ENCODE measurements at regions of chr16 and their contacts with region 1.

Region 1: DNA sequence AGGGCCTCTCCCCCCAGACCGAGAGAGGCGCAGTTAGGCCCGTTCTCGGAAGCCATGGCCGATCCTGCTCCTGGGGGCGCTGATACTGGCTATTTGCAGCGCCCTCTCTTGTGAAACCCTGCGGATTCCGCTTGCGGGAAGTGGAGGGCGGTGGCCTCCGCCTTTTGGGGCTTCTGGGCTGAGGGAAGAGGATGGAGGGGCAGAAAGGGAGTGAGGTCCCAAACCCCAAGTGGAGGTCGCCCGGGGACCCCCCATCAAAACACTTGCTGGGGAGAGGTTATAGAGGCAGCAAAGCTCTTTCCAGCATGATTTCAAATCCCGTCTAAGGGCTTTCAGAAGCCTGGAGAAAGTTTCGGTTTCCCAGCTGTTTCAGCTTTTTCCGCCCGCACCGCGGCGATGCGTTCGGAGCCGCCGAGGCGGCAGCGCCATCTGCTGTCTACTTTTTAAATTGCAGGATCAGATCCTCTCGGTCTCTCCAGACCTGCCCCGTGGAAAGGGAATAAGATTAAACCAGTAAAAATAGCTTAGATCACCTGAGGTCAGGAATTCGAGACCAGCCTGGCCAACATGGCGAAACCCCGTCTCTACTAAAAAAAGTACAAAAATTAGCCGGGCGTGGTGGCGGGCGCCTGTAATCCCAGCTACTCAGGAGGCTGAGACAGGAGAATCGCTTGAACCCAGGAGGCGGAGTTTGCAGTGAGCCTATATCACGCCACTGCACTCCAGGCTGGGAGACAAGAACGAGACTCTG is 15.8 kb downstream of the SNX20 start:
- DNase-seq: peak; percentile 82
- ATAC-seq: peak; percentile 48
- H3K4me3 Mint-ChIP-seq: peak overlapping the region; percentile 54
- H3K27ac Mint-ChIP-seq: peak overlapping the region; percentile 58
- H3K4me1 Mint-ChIP-seq: peaks cover 31% of the 10 kb centered on the region
- H3K27me3 Mint-ChIP-seq: no peaks in the 10 kb centered on the region
- CTCF ChIP-seq: peak; percentile 96

Region 2: DNA sequence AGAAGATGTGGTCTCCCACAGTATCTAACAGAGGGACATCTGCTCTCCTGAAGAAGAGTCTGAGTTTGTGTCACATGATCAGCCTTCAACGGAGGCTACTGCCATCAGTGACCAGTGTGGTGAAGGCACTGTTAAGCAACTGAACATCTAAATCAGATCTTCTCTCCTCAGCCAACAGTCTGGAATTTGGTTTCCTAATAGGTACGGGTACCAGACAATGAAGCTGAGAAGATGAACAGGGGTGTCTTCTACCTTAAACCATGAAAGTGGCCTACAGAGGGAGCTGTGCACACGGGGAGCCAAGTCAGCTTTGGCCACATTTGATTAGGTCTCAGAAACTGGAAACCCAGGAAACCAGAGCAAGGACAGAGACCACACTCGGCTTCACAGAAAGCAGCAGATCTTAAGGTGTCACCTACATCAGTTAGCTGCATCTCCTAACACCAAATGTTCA is 338.3 kb before region 1 on chr16:
- CTCF ChIA-PET with region 1: interaction called, 41 read pairs
- POLR2A ChIA-PET with region 1: no interaction called
- intact Hi-C with region 1: no loop called
- DNase-seq: peak; percentile 86
- ATAC-seq: peak; percentile 95
- H3K4me3 Mint-ChIP-seq: no peak overlapping the region
- H3K27ac Mint-ChIP-seq: peak overlapping the region; percentile 73
- H3K4me1 Mint-ChIP-seq: peaks cover 51% of the 10 kb centered on the region
- H3K27me3 Mint-ChIP-seq: no peaks in the 10 kb centered on the region
- CTCF ChIP-seq: peak; percentile 65

Region 3: DNA sequence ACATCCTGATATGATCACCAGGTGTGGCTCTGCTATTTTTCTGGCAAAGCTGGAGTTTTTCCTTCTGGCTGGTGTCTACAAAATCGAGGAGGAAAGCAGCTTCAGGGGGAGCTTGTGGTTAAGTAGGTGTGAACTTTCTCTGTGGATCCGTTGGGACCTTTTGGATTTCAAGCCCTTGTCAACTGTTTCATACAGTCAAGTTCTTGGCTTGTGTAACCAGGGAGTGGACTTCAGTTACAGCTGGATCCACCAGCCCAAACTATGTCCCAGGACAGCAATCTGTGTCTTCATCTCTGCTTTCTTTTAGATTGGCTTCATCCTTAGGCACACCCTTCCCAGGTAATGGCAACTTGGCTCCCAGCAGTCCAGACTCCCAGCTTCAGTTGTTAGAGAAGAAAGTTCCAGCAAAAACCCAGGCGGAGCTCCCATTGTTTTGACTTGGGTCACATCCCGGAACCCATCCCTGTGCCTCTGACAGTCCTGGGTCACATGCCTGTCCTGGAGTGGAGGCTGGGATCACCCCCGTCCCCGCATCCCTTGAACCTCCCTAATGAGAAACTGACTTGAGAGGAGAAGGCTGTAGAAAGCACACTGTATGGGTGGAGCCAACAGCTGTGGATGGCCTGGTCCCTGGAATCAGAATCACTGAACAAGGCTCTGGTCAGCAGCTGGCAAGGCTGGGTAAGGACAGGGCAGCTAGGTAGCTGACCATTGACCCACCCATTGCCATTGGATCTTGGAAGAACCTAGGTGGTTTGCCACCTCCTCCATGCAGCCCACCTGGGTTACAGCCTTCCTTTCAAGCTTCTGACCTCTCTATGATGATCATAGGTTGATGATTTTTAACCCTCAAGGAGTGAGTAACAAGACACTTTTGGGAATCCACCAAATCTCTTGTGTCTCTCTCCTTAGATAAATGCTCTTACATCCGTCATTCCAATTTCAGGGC is 99.0 kb before region 1 on chr16:
- CTCF ChIA-PET with region 1: interaction called, 11 read pairs
- POLR2A ChIA-PET with region 1: no interaction called
- intact Hi-C with region 1: no loop called
- DNase-seq: no peak
- ATAC-seq: no peak
- H3K4me3 Mint-ChIP-seq: no peak overlapping the region
- H3K27ac Mint-ChIP-seq: no peak overlapping the region
- H3K4me1 Mint-ChIP-seq: peaks cover 18% of the 10 kb centered on the region
- H3K27me3 Mint-ChIP-seq: no peaks in the 10 kb centered on the region
- CTCF ChIP-seq: no peak

Region 4: DNA sequence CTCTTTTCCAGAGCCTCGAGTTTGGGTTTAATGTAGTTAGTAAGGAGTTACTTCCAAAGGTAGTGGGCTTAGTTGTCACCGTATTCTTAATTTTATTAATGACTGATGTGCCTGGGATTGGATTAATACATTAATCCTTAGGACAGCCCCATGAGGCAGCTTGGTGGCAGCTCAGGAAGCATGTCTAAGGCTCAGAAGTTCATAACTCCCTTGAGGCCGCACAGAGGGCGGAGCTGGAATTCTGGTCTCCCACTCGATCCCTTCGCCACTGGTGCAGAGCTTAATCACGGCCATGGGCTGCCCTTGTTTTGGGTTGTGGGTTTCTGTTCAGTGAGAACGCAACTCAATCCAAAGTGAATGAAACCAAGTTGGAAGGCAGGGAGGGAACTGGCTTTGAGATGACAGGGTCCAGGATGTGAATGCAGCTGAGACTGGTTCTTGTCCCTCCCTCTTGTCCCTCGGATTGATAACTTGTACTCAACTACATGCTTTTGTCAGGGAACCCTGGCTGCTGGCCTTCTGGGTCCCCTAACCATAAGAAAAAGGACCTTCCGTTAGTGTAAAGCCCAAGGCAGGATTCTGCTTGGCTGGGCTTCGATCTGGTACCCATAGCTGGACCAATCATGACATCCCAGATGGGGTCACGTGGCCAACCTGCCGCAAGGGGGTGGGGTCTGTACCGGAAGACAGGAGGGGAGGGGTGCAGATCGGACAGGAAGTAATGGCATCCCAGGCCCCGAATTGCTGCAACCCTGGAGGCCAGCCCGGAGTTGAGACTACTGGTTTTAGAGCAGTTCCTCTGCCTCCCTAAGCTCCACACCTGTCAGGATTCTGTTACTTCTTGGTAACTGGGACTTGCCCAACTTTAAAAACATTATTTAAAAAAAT is 29.6 kb before region 1 on chr16:
- CTCF ChIA-PET with region 1: interaction called, 17 read pairs
- POLR2A ChIA-PET with region 1: no interaction called
- intact Hi-C with region 1: no loop called
- DNase-seq: peak; percentile 60
- ATAC-seq: peak; percentile 79
- H3K4me3 Mint-ChIP-seq: no peak overlapping the region
- H3K27ac Mint-ChIP-seq: no peak overlapping the region
- H3K4me1 Mint-ChIP-seq: peaks cover 2% of the 10 kb centered on the region
- H3K27me3 Mint-ChIP-seq: no peaks in the 10 kb centered on the region
- CTCF ChIP-seq: no peak

Region 5: GRCh38 chr16:50696575-50697420 is 31.5 kb after region 1 on chr16:
- CTCF ChIA-PET with region 1: interaction called, 11 read pairs
- POLR2A ChIA-PET with region 1: interaction called, 3 read pairs
- intact Hi-C with region 1: no loop called
- DNase-seq: peak; percentile 63
- ATAC-seq: peak; percentile 35
- H3K4me3 Mint-ChIP-seq: no peak overlapping the region
- H3K27ac Mint-ChIP-seq: peak overlapping the region; percentile 90
- H3K4me1 Mint-ChIP-seq: peaks cover 69% of the 10 kb centered on the region
- H3K27me3 Mint-ChIP-seq: peaks cover 8% of the 10 kb centered on the region
- CTCF ChIP-seq: no peak

Region 6: GRCh38 chr16:50781043-50781442 is 115.7 kb after region 1 on chr16:
- CTCF ChIA-PET with region 1: interaction called, 25 read pairs
- POLR2A ChIA-PET with region 1: interaction called, 4 read pairs
- intact Hi-C with region 1: no loop called
- DNase-seq: peak; percentile 24
- ATAC-seq: peak; percentile 43
- H3K4me3 Mint-ChIP-seq: no peak overlapping the region
- H3K27ac Mint-ChIP-seq: peak overlapping the region; percentile 77
- H3K4me1 Mint-ChIP-seq: peaks cover 55% of the 10 kb centered on the region
- H3K27me3 Mint-ChIP-seq: no peaks in the 10 kb centered on the region
- CTCF ChIP-seq: peak; percentile 30

Region 7: DNA sequence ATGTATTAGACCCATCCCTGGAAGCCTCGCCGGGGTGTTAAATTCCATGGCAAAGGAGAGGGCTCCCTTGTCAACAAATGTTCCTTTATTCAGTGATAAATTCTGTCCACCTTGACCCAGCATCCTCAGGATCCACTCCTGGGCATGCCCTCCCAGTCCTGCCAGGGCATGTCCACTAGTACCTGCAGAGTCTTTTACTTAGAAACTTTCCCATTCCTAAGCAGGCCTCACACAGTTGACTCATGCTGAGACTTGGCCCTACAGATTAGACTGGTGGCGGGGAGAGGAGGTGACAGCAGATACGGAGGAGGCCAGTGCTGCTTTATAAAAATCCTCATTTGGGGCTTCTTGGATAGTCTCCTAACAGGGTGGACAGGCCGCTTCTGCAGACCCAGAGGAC is 165.4 kb after region 1 on chr16:
- CTCF ChIA-PET with region 1: no interaction called
- POLR2A ChIA-PET with region 1: no interaction called
- intact Hi-C with region 1: no loop called
- DNase-seq: no peak
- ATAC-seq: no peak
- H3K4me3 Mint-ChIP-seq: no peak overlapping the region
- H3K27ac Mint-ChIP-seq: no peak overlapping the region
- H3K4me1 Mint-ChIP-seq: no peaks in the 10 kb centered on the region
- H3K27me3 Mint-ChIP-seq: peaks cover 11% of the 10 kb centered on the region
- CTCF ChIP-seq: no peak

Region 8: DNA sequence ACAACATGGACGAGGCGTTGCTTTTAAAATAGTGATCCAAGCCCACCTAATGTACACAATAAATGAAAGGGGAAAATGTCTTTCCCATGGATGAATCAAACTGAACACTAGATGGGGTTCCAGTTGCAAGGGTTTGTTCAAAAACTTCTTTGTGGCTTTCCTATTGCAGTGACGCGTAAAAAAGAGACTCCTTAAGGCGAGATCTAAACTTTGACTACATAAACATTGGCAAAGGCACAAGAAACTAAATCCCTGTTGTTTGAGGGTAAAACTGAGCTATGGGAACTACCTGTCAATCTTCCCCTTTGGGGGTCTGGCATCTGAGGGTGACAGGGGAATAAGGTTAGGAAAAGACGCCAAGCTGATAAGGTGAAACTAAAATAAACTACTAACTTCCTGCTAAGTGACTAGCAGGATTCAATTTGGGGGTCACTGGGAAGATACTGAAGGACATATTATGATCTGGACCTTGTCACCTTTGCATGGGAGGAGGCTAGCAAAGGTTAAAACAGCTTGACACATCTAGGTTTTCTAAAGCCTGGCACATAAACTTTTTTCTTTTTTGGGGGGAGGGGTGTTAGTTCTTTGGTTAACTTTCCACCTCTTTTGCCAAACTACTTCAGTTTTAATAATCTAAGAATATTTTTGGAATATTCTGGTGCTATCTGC is 481.1 kb after region 1 on chr16:
- CTCF ChIA-PET with region 1: no interaction called
- POLR2A ChIA-PET with region 1: no interaction called
- intact Hi-C with region 1: no loop called
- DNase-seq: no peak
- ATAC-seq: no peak
- H3K4me3 Mint-ChIP-seq: no peak overlapping the region
- H3K27ac Mint-ChIP-seq: no peak overlapping the region
- H3K4me1 Mint-ChIP-seq: no peaks in the 10 kb centered on the region
- H3K27me3 Mint-ChIP-seq: peaks cover 36% of the 10 kb centered on the region
- CTCF ChIP-seq: no peak

Measured in activated CD8-positive, alpha-beta T cell treated with anti-CD3 and anti-CD28 coated beads for 36 hours (primary cell).